ENCODE measurements at regions of chr1 and their contacts with region 1.

Region 1: GRCh38 chr1:12511516-12512468 is 106.2 kb downstream of the DHRS3 start:
- DNase-seq: no peak
- H3K4me3 Mint-ChIP-seq: peak overlapping the region; percentile 80
- H3K27ac Mint-ChIP-seq: peak overlapping the region; percentile 97
- H3K4me1 Mint-ChIP-seq: peaks cover 61% of the 10 kb centered on the region
- H3K27me3 Mint-ChIP-seq: no peaks in the 10 kb centered on the region

Region 2: GRCh38 chr1:12132092-12132491 is 379.7 kb before region 1 on chr1:
- CTCF ChIA-PET with region 1: no interaction called
- intact Hi-C with region 1: no loop called
- DNase-seq: no peak
- H3K4me3 Mint-ChIP-seq: no peak overlapping the region
- H3K27ac Mint-ChIP-seq: peak overlapping the region; percentile 68
- H3K4me1 Mint-ChIP-seq: peaks cover 34% of the 10 kb centered on the region
- H3K27me3 Mint-ChIP-seq: no peaks in the 10 kb centered on the region

Region 3: GRCh38 chr1:12386130-12386529 is 125.7 kb before region 1 on chr1:
- CTCF ChIA-PET with region 1: no interaction called
- intact Hi-C with region 1: loop called (anchors 2 kb)
- DNase-seq: peak; percentile 68
- H3K4me3 Mint-ChIP-seq: no peak overlapping the region
- H3K27ac Mint-ChIP-seq: peak overlapping the region; percentile 80
- H3K4me1 Mint-ChIP-seq: peaks cover 43% of the 10 kb centered on the region
- H3K27me3 Mint-ChIP-seq: no peaks in the 10 kb centered on the region

Region 4: GRCh38 chr1:12549460-12550349 is 37.9 kb after region 1 on chr1:
- CTCF ChIA-PET with region 1: no interaction called
- intact Hi-C with region 1: no loop called
- DNase-seq: peak; percentile 14
- H3K4me3 Mint-ChIP-seq: no peak overlapping the region
- H3K27ac Mint-ChIP-seq: no peak overlapping the region
- H3K4me1 Mint-ChIP-seq: peaks cover 10% of the 10 kb centered on the region
- H3K27me3 Mint-ChIP-seq: no peaks in the 10 kb centered on the region

Region 5: DNA sequence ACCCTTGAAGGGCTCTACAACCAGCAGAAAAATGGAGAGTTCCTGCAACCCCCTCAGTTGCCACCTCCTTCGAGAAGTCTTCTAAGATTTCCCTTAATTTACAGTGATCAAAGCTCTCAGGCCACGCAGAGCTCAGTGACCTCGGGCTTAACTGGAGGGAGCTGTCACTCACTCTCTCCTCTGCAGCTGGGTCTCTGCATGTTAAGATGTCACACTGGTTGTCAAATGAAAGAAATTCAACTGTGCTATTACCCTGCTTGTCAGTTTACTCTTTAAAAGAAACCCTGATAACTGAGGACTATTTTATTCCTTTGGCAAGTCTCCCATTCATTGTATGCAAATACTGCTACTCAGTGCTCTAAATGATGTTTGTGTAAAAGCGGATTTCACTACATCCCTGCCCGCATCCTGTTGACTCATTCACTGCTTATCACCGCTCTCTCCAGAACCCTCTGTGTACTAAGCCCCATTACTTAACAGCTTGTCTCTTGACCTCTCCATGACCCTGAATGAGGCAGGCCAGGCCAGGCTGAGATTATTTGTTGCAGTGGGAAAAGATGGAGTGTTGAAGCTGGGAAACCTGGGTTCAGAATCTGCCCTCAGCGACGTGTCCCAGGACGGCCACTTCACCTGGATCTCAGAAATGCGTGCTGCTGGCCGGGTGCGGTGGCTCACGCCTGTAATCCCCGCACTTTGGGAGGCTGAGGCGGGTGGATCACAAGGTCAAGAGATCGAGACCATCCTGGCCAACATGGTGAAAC is 92.5 kb after region 1 on chr1:
- CTCF ChIA-PET with region 1: no interaction called
- intact Hi-C with region 1: loop called (anchors 2 kb)
- DNase-seq: peak; percentile 90
- H3K4me3 Mint-ChIP-seq: peak overlapping the region; percentile 10
- H3K27ac Mint-ChIP-seq: peak overlapping the region; percentile 79
- H3K4me1 Mint-ChIP-seq: peaks cover 71% of the 10 kb centered on the region
- H3K27me3 Mint-ChIP-seq: no peaks in the 10 kb centered on the region

Measured in activated naive CD4-positive, alpha-beta T cell treated with anti-CD3 and anti-CD28 coated beads for 36 hours (primary cell).